ENCODE measurements at regions of chr20 and their contacts with region 1.

Region 1: GRCh38 chr20:34473262-34473883 is 42.8 kb upstream of the DYNLRB1 start:
- DNase-seq: peak; percentile 21
- H3K4me3 ChIP-seq: no peak overlapping the region
- H3K27ac ChIP-seq: no peak overlapping the region
- H3K4me1 ChIP-seq: no peaks in the 10 kb centered on the region
- H3K27me3 ChIP-seq: no peaks in the 10 kb centered on the region
- CTCF ChIP-seq: peak in 2 of 4 experiments; percentile 32 to 42
- POLR2A ChIP-seq: no peak

Region 2: GRCh38 chr20:34312544-34313217 is 160.7 kb before region 1 on chr20:
- intact Hi-C with region 1: loop called (anchors 2 kb)
- DNase-seq: peak; percentile 81
- H3K4me3 ChIP-seq: peak overlapping the region in 1 of 2 donors; percentile 15
- H3K27ac ChIP-seq: no peak overlapping the region
- H3K4me1 ChIP-seq: peaks cover 6% of the 10 kb centered on the region
- H3K27me3 ChIP-seq: no peaks in the 10 kb centered on the region
- CTCF ChIP-seq: peak; percentile 82 to 100 (median 96)
- POLR2A ChIP-seq: no peak

Region 3: GRCh38 chr20:34403908-34404307 is 69.5 kb before region 1 on chr20:
- intact Hi-C with region 1: no loop called
- DNase-seq: no peak
- H3K4me3 ChIP-seq: no peak overlapping the region
- H3K27ac ChIP-seq: no peak overlapping the region
- H3K4me1 ChIP-seq: no peaks in the 10 kb centered on the region
- H3K27me3 ChIP-seq: no peaks in the 10 kb centered on the region
- CTCF ChIP-seq: no peak
- POLR2A ChIP-seq: no peak

Region 4: DNA sequence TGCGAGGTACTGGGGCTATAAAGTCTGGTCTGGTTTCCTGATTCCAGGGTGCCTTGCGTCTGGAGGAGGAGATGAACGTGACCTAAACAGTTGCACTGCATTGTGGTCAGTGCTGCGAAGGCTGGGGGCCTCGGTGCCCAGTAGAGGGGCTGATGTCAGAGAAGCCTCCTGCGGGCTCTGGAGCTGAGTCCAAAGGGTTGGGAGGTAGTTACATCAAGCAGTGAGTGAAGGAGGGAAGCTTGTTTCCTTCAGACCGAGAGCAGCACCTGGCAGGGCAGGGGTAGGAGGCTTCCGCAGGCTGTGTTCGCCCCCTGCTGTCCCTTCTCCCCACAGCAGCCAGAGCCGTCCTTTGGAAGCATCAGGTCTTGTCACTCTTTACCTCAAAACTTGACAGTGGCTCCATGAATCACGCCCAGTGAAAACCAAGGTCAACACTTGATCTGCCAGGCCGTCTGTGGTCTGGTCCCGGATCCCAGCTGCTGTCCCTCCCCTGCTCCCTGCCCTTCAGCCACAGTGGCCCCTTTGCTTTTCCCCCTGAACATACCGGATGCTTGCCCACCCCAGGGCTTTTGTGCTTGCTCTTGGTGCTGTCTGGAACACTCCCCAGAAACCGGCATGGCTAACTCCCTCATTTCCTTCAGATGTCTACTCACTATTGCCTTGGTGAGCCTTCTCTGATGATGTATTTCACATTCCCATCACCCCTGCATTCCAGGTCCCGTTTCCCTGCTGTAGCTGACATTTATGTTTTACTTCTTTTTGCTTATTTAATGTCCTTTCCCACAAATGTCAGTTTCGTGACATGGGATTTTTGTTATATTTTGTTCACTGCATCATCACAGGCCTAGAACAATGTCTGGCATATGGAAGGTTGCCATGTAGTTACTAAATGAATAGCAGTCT is 49.8 kb after region 1 on chr20:
- intact Hi-C with region 1: loop called (anchors 5 kb)
- DNase-seq: peak; percentile 46
- H3K4me3 ChIP-seq: no peak overlapping the region
- H3K27ac ChIP-seq: peak overlapping the region; percentile 64 to 86
- H3K4me1 ChIP-seq: peaks cover 21% of the 10 kb centered on the region
- H3K27me3 ChIP-seq: no peaks in the 10 kb centered on the region
- CTCF ChIP-seq: peak in 2 of 4 experiments; percentile 63
- POLR2A ChIP-seq: no peak